Heart left ventricle (tissue), 16 donors: ENCODE measurements at regions of chr17 and their contacts with region 1.

Region 1: DNA sequence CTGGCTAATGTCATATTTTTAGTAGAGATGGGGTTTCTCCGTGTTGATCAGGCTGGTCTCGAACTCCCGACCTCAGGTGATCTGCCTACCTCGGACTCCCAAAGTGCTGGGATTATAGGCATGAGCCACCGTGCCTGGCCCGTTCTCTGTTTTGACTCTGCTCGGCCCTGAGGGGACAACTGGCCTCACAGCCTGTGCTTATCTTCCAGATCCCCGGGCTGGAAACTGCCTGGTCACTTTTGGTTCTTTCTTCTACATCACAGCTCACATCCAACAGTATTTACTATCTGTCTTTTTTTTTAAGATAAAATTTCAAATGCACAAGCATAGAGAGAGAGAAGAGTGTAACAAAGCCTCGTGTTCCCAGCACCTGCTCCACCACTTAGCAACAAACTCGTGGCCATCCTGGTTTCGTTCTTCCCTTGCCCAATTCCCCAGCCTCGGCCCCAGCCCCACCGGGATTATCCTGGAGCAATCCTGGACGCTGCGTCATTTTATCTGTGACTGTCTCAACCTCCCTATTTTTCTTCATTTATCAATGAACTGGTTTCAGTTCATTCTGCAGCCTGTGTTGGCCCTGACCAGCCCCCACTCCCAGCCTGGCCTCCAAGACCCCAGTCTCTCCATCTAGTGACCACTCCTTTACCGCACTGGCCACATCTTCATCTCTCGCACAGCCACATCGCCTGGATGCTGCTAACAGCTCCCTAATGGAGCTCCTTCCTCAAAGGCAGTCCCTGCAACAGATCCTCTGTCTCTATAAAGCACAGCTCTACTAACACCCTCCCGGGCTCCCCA is 21.1 kb downstream of the PIMREG start:
- DNase-seq: peak in 1 of 5 donors; percentile 24
- ATAC-seq: no peak
- H3K4me3 ChIP-seq: no peak overlapping the region
- H3K27ac ChIP-seq: no peak overlapping the region
- H3K4me1 ChIP-seq: no peaks in the 10 kb centered on the region
- H3K27me3 ChIP-seq: no peaks in the 10 kb centered on the region
- CTCF ChIP-seq: no peak
- POLR2A ChIP-seq: no peak

Region 2: GRCh38 chr17:6352801-6353560 is 112.4 kb before region 1 on chr17:
- intact Hi-C with region 1: no loop called
- DNase-seq: no peak
- ATAC-seq: no peak
- H3K4me3 ChIP-seq: no peak overlapping the region
- H3K27ac ChIP-seq: no peak overlapping the region
- H3K4me1 ChIP-seq: no peaks in the 10 kb centered on the region
- H3K27me3 ChIP-seq: no peaks in the 10 kb centered on the region
- CTCF ChIP-seq: no peak
- POLR2A ChIP-seq: no peak

Region 3: GRCh38 chr17:6413065-6413464 is 52.3 kb before region 1 on chr17:
- intact Hi-C with region 1: no loop called
- DNase-seq: no peak
- ATAC-seq: peak in 1 of 4 donors; percentile 37
- H3K4me3 ChIP-seq: no peak overlapping the region
- H3K27ac ChIP-seq: no peak overlapping the region
- H3K4me1 ChIP-seq: no peaks in the 10 kb centered on the region
- H3K27me3 ChIP-seq: peaks cover 0 to 8% (median 0%) of the 10 kb centered on the region in 9 donors
- CTCF ChIP-seq: peak in 10 of 12 donors; percentile 9 to 51 (median 32)
- POLR2A ChIP-seq: no peak

Region 4: GRCh38 chr17:6574687-6575595 is 109.5 kb after region 1 on chr17:
- intact Hi-C with region 1: loop called in 4 of 10 experiments (anchors 5 to 10 kb)
- DNase-seq: peak in 4 of 5 donors; percentile 48 to 70 (median 54)
- ATAC-seq: peak; percentile 42 to 88 (median 84)
- H3K4me3 ChIP-seq: no peak overlapping the region
- H3K27ac ChIP-seq: peak overlapping the region in 4 of 12 donors; percentile 13 to 45 (median 28)
- H3K4me1 ChIP-seq: peaks cover 0 to 24% (median 11%) of the 10 kb centered on the region in 12 donors
- H3K27me3 ChIP-seq: no peaks in the 10 kb centered on the region
- CTCF ChIP-seq: no peak
- POLR2A ChIP-seq: no peak